ENCODE measurements at regions of chr7 and their contacts with region 1.

Region 1: DNA sequence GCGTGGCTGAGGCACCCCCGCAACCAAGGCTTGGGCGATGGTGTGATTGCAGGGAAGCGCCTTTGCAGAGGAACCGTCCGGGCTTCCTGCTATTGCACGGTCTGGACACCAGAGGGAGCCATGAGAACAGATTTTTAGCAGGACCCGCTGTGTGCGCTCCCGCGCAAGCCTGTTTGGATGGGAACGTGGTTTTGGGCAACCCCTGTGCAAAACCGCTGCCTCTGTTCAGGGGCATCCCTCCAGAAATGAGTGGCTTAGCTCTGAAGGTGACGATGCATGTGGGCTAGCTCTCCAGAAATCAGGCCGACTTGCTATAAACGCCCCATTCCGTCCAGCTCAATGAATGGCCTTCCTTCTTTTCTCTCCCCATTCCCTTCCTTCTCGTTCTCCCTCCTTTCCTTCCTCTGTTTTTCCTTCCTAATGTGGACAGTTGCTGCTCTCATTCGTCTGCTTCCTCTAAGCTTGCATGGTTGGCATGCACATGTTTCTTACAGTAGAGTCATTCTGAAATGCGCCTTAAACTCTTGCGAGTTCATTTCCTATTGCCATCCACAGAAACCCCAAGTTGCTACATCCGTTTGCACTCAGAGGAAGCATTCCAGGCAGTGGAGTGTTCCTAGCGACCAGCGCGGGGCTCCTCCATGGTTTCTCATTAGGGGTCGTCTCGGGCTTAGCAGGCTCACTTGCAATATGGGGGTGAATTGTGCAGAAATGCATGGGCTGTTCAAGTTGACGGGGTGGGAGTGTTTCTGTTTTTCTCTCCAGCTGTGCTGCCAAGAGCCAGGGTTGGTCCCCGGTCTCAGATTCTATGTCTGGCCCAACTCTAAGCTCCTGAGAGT is 302.5 kb upstream of the GALNT17 start:
- DNase-seq: peak; percentile 53 to 79 (median 75)
- H3K4me3 ChIP-seq: peak overlapping the region in 5 of 7 experiments; percentile 6 to 63 (median 43)
- H3K27ac ChIP-seq: no peak overlapping the region
- H3K4me1 ChIP-seq: peaks cover 0 to 7% (median 7%) of the 10 kb centered on the region in 4 experiments
- H3K27me3 ChIP-seq: peaks cover 0 to 17% (median 9%) of the 10 kb centered on the region in 5 experiments

Region 2: GRCh38 chr7:70856866-70857630 is 27.6 kb after region 1 on chr7:
- CTCF ChIA-PET with region 1: interaction called, 11 read pairs
- POLR2A ChIA-PET with region 1: no interaction called
- DNase-seq: peak; percentile 46 to 66 (median 50)
- H3K4me3 ChIP-seq: no peak overlapping the region
- H3K27ac ChIP-seq: no peak overlapping the region
- H3K4me1 ChIP-seq: no peaks in the 10 kb centered on the region
- H3K27me3 ChIP-seq: no peaks in the 10 kb centered on the region

Measured in common myeloid progenitor, CD34-positive (primary cell).